ENCODE measurements at regions of chr1 and their contacts with region 1.

Region 1: GRCh38 chr1:154324669-154325582 is at the start of gene ATP8B2:
- DNase-seq: peak; percentile 79 to 85 (median 81)
- H3K4me3 ChIP-seq: peak within 1 kb of the TSS; percentile 61 to 66
- H3K4me3 Mint-ChIP-seq: peak within 1 kb of the TSS; percentile 93 to 99 (median 98)
- H3K27ac ChIP-seq: peak within 1 kb of the TSS; percentile 89
- H3K27ac Mint-ChIP-seq: peak within 1 kb of the TSS; percentile 86 to 98 (median 96)
- H3K4me1 ChIP-seq: peaks cover 41% of the 10 kb centered on the region
- H3K4me1 Mint-ChIP-seq: peaks cover 22 to 49% (median 32%) of the 10 kb centered on the region in 4 donors
- H3K27me3 ChIP-seq: no peaks in the 10 kb centered on the region
- H3K27me3 Mint-ChIP-seq: no peaks in the 10 kb centered on the region
- total RNA-seq, gene ATP8B2: 186 TPM

Region 2: DNA sequence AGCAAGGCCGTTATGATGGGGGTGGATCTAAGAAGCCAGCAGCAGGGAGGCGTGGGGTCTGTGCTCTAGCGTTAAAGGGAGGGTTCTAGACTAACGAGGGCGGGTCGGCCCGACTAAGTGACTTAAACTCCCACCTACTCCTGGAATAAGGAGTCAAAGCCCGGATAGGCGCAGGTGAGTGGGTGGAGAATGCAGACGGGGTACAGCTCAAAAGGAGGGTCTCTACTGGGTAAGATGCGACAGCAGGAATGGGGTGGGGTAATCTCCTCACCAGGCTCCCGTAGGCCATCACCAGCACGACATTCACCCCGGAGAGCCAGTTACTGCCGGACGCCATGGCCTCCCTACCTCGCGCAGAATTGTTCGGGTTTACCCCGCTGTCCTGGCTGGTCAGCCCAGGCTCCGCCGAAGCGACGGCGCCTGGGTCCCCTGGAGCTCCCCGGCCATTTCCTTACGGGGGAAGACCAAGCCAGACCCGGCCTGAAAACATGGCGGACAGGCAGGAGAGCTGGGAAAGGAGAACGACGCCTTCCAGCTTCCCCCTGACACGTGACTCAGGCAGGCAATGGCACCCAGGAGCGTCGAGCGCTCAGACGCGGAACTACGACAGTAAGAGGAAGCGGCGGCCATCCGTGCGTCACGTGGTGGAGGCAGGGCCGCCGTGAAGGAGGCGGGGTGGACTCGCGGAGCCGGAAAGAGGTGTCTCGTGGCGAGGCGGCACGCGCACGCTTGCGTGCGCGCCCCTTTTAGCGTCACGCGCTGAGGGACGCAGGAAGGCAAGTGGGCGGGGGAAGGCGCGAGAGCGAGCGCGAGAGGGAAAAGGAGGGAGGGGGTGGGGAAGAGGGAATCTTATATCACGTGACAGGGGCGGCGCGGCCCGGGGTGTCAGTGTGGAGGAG is 104.6 kb before region 1 on chr1 and contains the start of gene UBAP2L:
- CTCF ChIA-PET with region 1: interaction called, 4 read pairs
- POLR2A ChIA-PET with region 1: interaction called, 9 read pairs
- intact Hi-C with region 1: loop called (anchors 1 kb)
- DNase-seq: peak; percentile 97 to 99 (median 99)
- H3K4me3 ChIP-seq: peak within 1 kb of the TSS; percentile 93 to 99
- H3K4me3 Mint-ChIP-seq: peak within 1 kb of the TSS; percentile 92 to 100 (median 97)
- H3K27ac ChIP-seq: peak within 1 kb of the TSS; percentile 97
- H3K27ac Mint-ChIP-seq: peak within 1 kb of the TSS; percentile 96 to 99 (median 99)
- H3K4me1 ChIP-seq: peaks cover 66% of the 10 kb centered on the region
- H3K4me1 Mint-ChIP-seq: peaks cover 52 to 78% (median 65%) of the 10 kb centered on the region in 4 donors
- H3K27me3 ChIP-seq: no peaks in the 10 kb centered on the region
- H3K27me3 Mint-ChIP-seq: no peaks in the 10 kb centered on the region
- total RNA-seq, gene UBAP2L: 180 to 189 TPM

Region 3: GRCh38 chr1:154295408-154296235 is 29.3 kb before region 1 on chr1:
- CTCF ChIA-PET with region 1: no interaction called
- POLR2A ChIA-PET with region 1: no interaction called
- intact Hi-C with region 1: no loop called
- DNase-seq: peak in 1 of 5 donors; percentile 22
- H3K4me3 ChIP-seq: no peak overlapping the region
- H3K4me3 Mint-ChIP-seq: no peak overlapping the region
- H3K27ac ChIP-seq: no peak overlapping the region
- H3K27ac Mint-ChIP-seq: peak overlapping the region in 2 of 7 donors; percentile 29 to 75
- H3K4me1 ChIP-seq: no peaks in the 10 kb centered on the region
- H3K4me1 Mint-ChIP-seq: no peaks in the 10 kb centered on the region
- H3K27me3 ChIP-seq: no peaks in the 10 kb centered on the region
- H3K27me3 Mint-ChIP-seq: no peaks in the 10 kb centered on the region

Region 4: DNA sequence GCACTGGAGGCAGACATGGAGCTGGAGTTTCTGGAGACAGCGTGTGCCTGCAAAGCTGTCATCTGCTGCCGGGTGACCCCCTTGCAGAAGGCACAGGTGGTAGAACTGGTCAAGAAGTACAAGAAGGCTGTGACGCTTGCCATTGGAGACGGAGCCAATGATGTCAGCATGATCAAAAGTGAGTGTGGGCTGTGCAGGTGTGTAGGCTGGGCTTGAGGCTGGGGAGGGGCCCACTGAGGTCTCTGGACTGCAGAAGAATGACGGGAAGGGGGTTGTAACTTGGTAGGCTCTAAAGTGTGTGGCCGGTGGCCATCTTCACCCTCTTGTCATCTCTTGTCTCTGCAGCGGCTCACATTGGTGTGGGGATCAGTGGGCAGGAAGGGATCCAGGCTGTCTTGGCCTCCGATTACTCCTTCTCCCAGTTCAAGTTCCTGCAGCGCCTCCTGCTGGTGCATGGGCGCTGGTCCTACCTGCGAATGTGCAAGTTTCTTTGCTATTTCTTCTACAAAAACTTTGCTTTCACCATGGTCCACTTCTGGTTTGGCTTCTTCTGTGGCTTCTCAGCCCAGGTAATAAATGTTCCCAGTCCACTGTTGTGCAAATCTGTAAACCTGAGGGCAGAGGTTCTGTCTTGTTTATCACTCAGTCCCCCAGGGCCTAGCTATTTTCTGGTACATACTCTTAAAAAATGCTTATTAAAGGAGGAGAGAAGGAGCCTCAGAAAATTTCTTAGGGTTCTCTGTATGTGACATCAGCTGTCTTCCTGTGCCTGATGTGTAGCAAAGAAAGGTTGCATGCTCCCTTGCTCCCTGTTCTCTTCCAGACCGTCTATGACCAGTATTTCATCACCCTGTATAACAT is 20.3 kb after region 1 on chr1:
- CTCF ChIA-PET with region 1: interaction called, 543 read pairs
- POLR2A ChIA-PET with region 1: interaction called, 728 read pairs
- intact Hi-C with region 1: loop called (anchors 1 kb)
- DNase-seq: peak; percentile 75 to 84 (median 81)
- H3K4me3 ChIP-seq: peak overlapping the region; percentile 62
- H3K4me3 Mint-ChIP-seq: peak overlapping the region; percentile 87 to 99 (median 94)
- H3K27ac ChIP-seq: peak overlapping the region; percentile 66
- H3K27ac Mint-ChIP-seq: peak overlapping the region; percentile 86 to 98 (median 92)
- H3K4me1 ChIP-seq: peaks cover 96% of the 10 kb centered on the region
- H3K4me1 Mint-ChIP-seq: peaks cover 54 to 98% (median 76%) of the 10 kb centered on the region in 4 donors
- H3K27me3 ChIP-seq: no peaks in the 10 kb centered on the region
- H3K27me3 Mint-ChIP-seq: no peaks in the 10 kb centered on the region

Region 5: GRCh38 chr1:154352581-154353459 is 27.9 kb after region 1 on chr1:
- CTCF ChIA-PET with region 1: interaction called, 543 read pairs
- POLR2A ChIA-PET with region 1: interaction called, 728 read pairs
- intact Hi-C with region 1: loop called (anchors 2 kb)
- DNase-seq: peak; percentile 44 to 68 (median 48)
- H3K4me3 ChIP-seq: peak overlapping the region; percentile 69 to 77
- H3K4me3 Mint-ChIP-seq: peak overlapping the region; percentile 84 to 95 (median 92)
- H3K27ac ChIP-seq: peak overlapping the region; percentile 51
- H3K27ac Mint-ChIP-seq: peak overlapping the region; percentile 38 to 96 (median 90)
- H3K4me1 ChIP-seq: peaks cover 54% of the 10 kb centered on the region
- H3K4me1 Mint-ChIP-seq: peaks cover 30 to 61% (median 44%) of the 10 kb centered on the region in 4 donors
- H3K27me3 ChIP-seq: no peaks in the 10 kb centered on the region
- H3K27me3 Mint-ChIP-seq: no peaks in the 10 kb centered on the region

Region 6: DNA sequence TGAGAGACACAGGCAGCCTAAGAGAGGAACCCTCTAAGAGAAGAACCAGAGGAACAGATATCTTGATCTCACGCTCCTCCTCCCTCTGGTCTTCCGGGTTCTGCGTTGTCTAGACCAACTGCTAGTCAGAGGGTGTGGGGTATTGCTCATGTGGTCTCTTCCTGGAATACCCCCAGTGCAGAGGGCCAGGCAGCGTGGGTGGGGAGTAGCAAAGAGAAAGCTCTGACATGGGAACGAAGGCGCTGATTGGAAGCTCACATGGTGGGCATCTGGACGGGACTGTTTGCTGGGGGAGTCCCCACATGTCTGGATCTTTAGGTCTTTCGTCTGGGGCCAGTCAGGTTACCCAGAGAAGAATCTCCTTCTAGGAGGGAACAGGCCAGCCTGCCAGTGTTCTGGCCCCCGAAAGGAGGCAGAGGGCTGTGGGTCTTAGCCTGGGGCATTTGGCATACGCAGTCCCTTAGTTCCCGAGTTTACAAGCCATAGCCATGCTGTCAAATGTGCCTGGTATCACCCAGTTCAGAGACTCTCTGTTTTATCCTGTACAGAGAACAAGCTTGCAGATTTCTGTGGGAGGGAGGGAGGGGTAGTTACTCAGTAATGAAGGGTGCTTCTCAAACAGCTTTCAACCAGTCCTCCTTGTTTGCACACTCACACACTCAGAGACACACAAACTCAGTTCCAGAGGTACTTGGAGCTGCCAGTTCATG is 61.9 kb after region 1 on chr1:
- CTCF ChIA-PET with region 1: interaction called, 6 read pairs
- POLR2A ChIA-PET with region 1: interaction called, 12 read pairs
- intact Hi-C with region 1: no loop called
- DNase-seq: peak in 4 of 5 donors; percentile 43 to 86 (median 58)
- H3K4me3 ChIP-seq: peak overlapping the region in 1 of 2 donors; percentile 34
- H3K4me3 Mint-ChIP-seq: peak overlapping the region; percentile 79 to 88 (median 85)
- H3K27ac ChIP-seq: peak overlapping the region; percentile 67
- H3K27ac Mint-ChIP-seq: peak overlapping the region; percentile 88 to 99 (median 97)
- H3K4me1 ChIP-seq: peaks cover 36% of the 10 kb centered on the region
- H3K4me1 Mint-ChIP-seq: peaks cover 22 to 34% (median 28%) of the 10 kb centered on the region in 4 donors
- H3K27me3 ChIP-seq: no peaks in the 10 kb centered on the region
- H3K27me3 Mint-ChIP-seq: no peaks in the 10 kb centered on the region

Measured in CD4-positive, alpha-beta memory T cell (primary cell).